ENCODE measurements at regions of chr11 and their contacts with region 1.

Region 1: DNA sequence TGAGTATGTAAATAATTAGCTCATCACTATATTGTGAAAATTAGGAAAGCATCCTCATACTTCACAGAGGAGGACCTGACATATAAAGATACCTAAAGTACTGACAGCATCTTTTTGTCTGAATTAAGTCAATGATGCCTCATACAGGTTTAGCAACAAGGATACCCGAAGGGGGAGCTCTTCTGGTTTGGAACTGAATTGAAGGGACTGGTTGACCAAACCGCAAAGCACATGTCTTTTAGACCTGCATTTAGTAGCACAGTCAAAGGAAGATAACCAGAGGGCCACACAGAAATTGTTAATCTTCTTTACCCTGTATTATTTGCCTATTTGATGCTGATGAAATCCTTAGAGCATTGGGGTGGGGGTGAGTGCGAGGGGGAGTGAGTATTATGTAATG is 12.9 kb upstream of the WT1 start:
- DNase-seq: no peak
- CTCF ChIP-seq: peak; percentile 23

Region 2: DNA sequence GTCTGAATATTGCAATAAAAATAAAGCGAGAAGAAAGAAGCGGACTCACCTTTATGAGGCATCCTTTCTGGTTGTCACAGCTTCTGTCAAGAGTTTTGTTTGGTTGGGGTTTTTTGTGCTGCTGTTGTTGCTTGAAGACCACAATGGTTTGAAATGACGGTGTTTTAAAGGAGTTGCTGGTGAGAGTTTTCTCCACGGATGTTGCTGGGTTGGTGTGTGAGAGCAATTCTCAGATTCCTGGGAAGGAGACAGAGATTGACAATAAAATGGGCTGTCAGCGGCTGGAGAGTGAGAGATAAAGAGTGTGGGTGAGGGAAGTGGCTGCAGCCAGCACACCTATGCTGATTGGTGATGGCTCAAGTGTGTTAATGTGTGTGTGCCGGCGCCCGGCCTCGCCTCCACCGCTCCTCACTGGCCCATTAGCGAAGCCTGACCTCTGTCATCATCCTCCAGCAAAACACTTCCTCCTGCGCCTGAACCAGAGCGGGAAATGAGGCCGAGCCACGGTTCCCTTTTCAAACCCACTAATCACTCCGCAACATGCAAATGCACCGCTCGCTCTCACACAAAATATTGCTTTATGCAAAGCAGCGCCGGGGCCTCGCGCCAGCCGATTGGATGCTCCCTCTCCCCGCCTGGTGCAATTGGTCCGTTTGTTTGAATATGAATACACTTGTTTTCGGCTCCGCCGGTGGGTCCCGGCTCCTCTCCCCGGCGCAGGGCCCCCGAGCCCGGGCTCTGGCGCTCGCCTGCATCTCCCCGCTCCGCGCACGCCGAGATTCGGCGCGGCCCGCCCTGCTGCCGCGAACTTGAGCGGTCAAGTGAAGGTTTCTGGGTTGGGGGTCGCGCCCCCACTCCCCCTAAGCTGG is 637.2 kb before region 1 on chr11 and contains the start of gene PAX6:
- in situ Hi-C with region 1: loop called (anchors 25 kb)
- DNase-seq: peak; percentile 85
- CTCF ChIP-seq: no peak

Region 3: DNA sequence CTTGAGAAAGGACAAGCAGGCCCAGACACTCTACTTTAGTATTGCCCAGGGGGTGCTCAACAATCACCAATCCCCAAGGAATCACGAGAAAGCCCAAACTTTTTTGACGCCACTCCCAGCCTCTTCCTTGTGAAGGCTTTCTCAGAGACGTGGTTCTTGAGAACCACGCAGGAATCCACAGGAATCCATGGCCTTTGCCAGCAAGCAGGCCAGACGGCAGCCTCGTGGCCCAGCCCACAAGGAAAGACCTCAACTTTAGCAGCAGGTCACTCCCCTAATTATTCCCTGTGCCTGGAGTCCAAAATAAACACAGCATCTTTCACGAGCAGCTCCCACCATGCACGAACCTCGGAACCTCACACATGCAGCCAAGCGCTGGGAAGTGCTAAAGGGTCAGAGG is 117.1 kb before region 1 on chr11:
- in situ Hi-C with region 1: no loop called
- DNase-seq: no peak
- CTCF ChIP-seq: no peak

Measured in GM13977 (cell line).